ENCODE measurements at regions of chr10 and their contacts with region 1.

Region 1: DNA sequence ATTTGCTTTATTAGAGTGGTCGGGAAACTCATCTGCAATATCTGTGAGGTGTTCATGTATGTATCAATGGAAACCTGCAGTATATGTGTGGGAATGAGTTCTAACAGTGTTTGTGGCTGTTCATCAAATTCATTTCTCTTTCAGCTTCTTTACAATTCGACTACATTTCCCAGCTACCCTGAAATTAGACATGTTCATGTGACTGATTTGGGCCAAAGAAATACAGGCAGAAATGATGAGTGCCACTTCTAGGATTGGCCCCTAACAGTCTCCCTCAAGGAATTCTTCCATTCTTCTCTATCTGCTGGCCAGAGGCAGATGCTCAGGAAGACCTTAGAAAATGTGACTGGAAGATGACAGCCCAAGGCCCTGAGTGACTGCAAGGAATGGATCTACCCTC is 114.8 kb upstream of the WAC start:
- DNase-seq: no peak
- ATAC-seq: no peak
- H3K4me3 Mint-ChIP-seq: no peak overlapping the region
- H3K27ac Mint-ChIP-seq: no peak overlapping the region
- H3K4me1 Mint-ChIP-seq: no peaks in the 10 kb centered on the region
- H3K27me3 Mint-ChIP-seq: peaks cover 2% of the 10 kb centered on the region
- CTCF ChIP-seq: no peak

Region 2: DNA sequence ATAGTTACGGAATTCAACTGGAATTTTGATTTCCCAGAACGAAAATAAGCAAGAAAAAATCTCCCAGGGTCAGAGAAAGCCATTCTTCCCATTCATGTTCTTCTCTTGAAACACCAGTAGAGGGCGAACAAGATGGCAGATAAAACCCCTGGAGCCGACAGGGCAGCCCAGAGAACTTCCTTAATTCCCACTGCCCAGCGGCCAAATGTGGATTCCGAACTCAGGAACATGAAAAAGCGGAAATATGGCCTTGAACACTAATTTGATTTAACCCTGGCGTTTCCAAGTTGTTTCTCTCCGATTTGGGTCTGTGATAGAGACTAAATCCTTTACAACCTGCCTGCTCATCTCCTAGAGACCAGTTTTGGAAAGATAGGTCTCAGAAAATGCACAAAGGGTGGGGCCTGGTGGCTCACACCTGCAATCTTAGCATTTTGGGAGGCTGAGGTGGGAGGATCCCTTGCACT is 14.2 kb after region 1 on chr10:
- CTCF ChIA-PET with region 1: interaction called, 10 read pairs
- POLR2A ChIA-PET with region 1: no interaction called
- intact Hi-C with region 1: no loop called
- DNase-seq: peak; percentile 16
- ATAC-seq: peak; percentile 51
- H3K4me3 Mint-ChIP-seq: peak overlapping the region; percentile 1
- H3K27ac Mint-ChIP-seq: no peak overlapping the region
- H3K4me1 Mint-ChIP-seq: peaks cover 2% of the 10 kb centered on the region
- H3K27me3 Mint-ChIP-seq: no peaks in the 10 kb centered on the region
- CTCF ChIP-seq: peak; percentile 91

Measured in activated CD8-positive, alpha-beta T cell treated with anti-CD3 and anti-CD28 coated beads for 36 hours (primary cell).